Body of pancreas (tissue), 4 donors: ENCODE measurements at regions of chr10 and their contacts with region 1.

Region 1: DNA sequence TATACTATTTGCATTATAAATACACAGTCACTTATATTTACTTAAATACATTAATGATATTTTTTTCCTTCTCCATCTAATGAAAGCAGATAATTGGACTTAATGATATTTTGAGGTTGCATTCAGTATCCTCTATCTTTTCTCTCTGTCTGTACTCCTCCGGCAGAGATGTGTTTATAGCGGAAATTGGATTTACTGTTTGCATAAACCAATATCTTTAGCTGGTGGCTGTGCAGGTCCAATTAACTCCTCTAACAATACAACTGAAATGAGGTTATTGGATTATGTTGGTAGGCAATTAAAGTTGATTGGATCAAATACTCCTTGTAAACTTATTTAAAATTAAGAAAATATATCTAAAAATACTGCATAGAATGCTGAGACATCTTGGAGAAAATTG is 1044.2 kb upstream of the SORCS1 start:
- DNase-seq: no peak
- ATAC-seq: no peak
- H3K4me3 ChIP-seq: no peak overlapping the region
- H3K27ac ChIP-seq: no peak overlapping the region
- H3K4me1 ChIP-seq: no peaks in the 10 kb centered on the region
- H3K27me3 ChIP-seq: no peaks in the 10 kb centered on the region
- CTCF ChIP-seq: no peak
- POLR2A ChIP-seq: no peak

Region 2: GRCh38 chr10:108404155-108404554 is 195.4 kb after region 1 on chr10:
- intact Hi-C with region 1: loop called (anchors 10 kb)
- DNase-seq: no peak
- ATAC-seq: no peak
- H3K4me3 ChIP-seq: no peak overlapping the region
- H3K27ac ChIP-seq: no peak overlapping the region
- H3K4me1 ChIP-seq: no peaks in the 10 kb centered on the region
- H3K27me3 ChIP-seq: no peaks in the 10 kb centered on the region
- CTCF ChIP-seq: no peak
- POLR2A ChIP-seq: no peak